ENCODE measurements at regions of chr19 and their contacts with region 1.

Region 1: DNA sequence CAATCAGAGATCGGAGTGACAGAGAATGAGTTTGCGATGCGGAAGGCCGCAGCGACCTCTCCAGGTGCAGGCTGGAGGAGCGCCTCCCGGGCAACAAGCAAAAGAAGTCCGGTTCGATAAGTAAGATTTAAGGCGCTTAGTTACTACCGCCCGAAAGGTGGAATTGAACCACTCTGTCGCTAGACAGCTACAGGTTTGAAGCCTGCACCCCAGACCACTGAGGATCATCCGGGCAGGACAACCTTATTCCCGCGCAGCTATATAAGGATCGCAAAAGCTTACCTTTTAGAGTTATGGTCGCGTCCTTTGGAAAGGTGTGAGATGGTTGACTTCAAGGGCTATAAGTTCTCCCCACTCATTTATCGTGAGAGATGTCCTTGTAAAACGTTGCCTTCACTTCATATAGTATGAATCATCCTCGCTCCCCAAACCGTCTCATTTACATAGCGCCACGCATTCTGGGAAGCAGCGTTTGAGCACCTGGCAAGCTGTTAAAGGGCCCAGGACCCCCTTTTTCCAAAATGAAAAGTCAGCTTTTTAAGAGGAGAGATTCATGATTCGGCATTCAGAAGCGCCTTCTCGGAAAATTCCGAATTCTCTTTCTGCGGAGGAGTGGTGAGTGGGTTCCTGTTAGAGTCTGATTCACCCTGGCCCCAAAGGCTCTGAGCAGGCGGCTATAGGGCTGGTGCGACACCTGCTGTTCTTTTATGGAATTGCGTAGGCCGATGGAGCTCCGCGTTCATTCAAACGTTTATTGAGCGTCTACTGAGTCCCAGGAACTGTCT is 10.8 kb downstream of the FOSB start:
- DNase-seq: peak; percentile 81
- H3K4me3 ChIP-seq: peak overlapping the region; percentile 70
- H3K27ac ChIP-seq: peak overlapping the region; percentile 98
- H3K4me1 ChIP-seq: peaks cover 14% of the 10 kb centered on the region
- H3K27me3 ChIP-seq: peaks cover 9% of the 10 kb centered on the region
- CTCF ChIP-seq: peak; percentile 99

Region 2: DNA sequence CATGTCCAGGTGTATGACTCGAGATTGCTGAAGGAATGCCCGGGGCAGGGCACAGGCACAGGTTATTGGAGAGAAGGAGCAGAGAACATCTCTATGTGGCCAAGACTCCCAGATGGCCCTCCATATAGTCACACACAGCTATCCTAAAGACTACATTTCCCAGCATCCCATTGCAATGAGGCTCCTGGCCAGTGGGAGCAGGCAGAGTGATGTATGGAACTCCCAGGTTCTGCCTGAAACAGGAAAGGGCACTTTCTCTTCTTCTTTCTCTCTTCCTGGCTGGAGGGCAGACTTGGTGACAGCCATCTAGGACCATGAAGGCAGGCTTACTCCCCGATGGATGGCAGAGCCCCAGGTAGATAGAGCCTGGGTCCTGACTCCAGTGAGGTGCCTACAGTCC is 87.3 kb before region 1 on chr19:
- intact Hi-C with region 1: no loop called
- DNase-seq: no peak
- H3K4me3 ChIP-seq: no peak overlapping the region
- H3K27ac ChIP-seq: no peak overlapping the region
- H3K4me1 ChIP-seq: peaks cover 6% of the 10 kb centered on the region
- H3K27me3 ChIP-seq: no peaks in the 10 kb centered on the region
- CTCF ChIP-seq: no peak

Region 3: GRCh38 chr19:45439569-45440254 is 38.9 kb before region 1 on chr19:
- intact Hi-C with region 1: loop called (anchors 1 kb)
- DNase-seq: peak; percentile 90
- H3K4me3 ChIP-seq: peak overlapping the region; percentile 82
- H3K27ac ChIP-seq: peak overlapping the region; percentile 98
- H3K4me1 ChIP-seq: peaks cover 39% of the 10 kb centered on the region
- H3K27me3 ChIP-seq: no peaks in the 10 kb centered on the region
- CTCF ChIP-seq: peak; percentile 100

Measured in left ventricle myocardium inferior (tissue), 1 donor.